Dorsolateral prefrontal cortex (tissue), 120 donors: ENCODE measurements at regions of chr3 and their contacts with region 1.

Region 1: GRCh38 chr3:152183473-152183872 is 85.3 kb upstream of the MBNL1 start:
- DNase-seq: peak in 7 of 10 donors; percentile 7 to 49 (median 28)
- H3K4me3 ChIP-seq: no peak overlapping the region
- H3K27ac ChIP-seq: no peak overlapping the region
- H3K27me3 ChIP-seq: no peaks in the 10 kb centered on the region
- CTCF ChIP-seq: peak in 54 of 56 donors; percentile 30 to 78 (median 57)

Region 2: GRCh38 chr3:151412989-151413388 is 770.5 kb before region 1 on chr3:
- intact Hi-C with region 1: no loop called
- DNase-seq: no peak
- H3K4me3 ChIP-seq: no peak overlapping the region
- H3K27ac ChIP-seq: no peak overlapping the region
- H3K27me3 ChIP-seq: no peaks in the 10 kb centered on the region
- CTCF ChIP-seq: no peak

Region 3: GRCh38 chr3:152466784-152467183 is 283.3 kb after region 1 on chr3:
- intact Hi-C with region 1: loop called in 1 of 2 experiments (anchors 10 kb)
- DNase-seq: no peak
- H3K4me3 ChIP-seq: no peak overlapping the region
- H3K27ac ChIP-seq: peak overlapping the region in 4 of 59 donors; percentile 10 to 70 (median 63)
- H3K27me3 ChIP-seq: no peaks in the 10 kb centered on the region
- CTCF ChIP-seq: peak in 55 of 56 donors; percentile 17 to 68 (median 52)